ENCODE measurements at regions of chr22 and their contacts with region 1.

Region 1: DNA sequence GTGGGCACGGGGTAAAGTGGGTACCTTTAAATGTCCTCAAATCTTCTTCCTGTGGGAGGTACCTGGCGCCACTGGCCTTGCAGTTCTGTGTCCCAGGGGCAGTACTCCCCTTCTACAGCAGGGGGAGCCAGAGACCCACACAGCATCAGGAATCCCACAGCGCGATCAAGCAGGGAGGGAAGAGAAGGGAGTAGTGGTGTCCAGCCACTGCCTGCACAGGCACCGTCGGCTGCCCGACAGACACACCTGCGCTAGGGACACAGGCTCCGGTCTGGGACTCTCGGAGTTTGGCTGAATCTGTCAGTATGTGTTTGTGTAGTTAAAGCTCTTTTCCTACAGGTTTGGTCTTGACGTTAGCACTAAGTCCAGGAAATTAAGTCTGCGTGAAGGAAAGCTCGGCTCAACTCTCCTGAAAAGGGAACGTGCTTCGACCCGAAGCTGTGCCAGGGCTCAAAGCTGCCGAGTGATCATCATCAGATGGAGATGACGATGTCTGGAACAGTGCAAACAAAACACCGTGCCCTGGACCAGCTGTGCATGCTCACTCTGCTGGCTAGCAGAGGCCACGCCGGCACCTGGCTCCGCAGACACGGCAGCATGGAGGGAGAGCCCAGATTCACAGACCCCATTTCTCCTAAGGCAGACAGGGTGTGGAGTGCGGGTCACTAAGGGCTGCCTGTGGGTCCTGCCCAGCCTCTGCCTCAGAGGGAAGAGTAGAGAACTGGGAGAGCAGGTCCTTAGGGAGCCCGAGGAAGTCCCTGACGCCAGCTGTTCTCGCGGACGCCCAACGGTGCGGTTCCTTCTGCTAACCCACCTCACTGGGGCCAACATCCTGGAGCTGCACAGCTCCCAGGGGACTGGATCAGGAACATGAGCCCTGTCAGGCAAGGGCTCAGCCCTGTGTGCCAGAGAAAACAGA is 56.0 kb upstream of the BID start:
- DNase-seq: peak; percentile 75 to 82 (median 78)
- H3K4me3 ChIP-seq: no peak overlapping the region
- H3K4me3 Mint-ChIP-seq: no peak overlapping the region
- H3K27ac ChIP-seq: no peak overlapping the region
- H3K27ac Mint-ChIP-seq: peak overlapping the region in 3 of 7 donors; percentile 9 to 42 (median 35)
- H3K4me1 ChIP-seq: peaks cover 4% of the 10 kb centered on the region
- H3K4me1 Mint-ChIP-seq: peaks cover 5 to 10% (median 8%) of the 10 kb centered on the region in 4 donors
- H3K27me3 ChIP-seq: no peaks in the 10 kb centered on the region
- H3K27me3 Mint-ChIP-seq: no peaks in the 10 kb centered on the region

Region 2: GRCh38 chr22:18024276-18024947 is 194.1 kb after region 1 on chr22 and contains the start of gene MICAL3:
- CTCF ChIA-PET with region 1: interaction called, 54 read pairs
- POLR2A ChIA-PET with region 1: interaction called, 6 read pairs
- intact Hi-C with region 1: no loop called
- DNase-seq: peak; percentile 46 to 68 (median 64)
- H3K4me3 ChIP-seq: peak within 1 kb of the TSS; percentile 40 to 61
- H3K4me3 Mint-ChIP-seq: peak within 1 kb of the TSS; percentile 88 to 97 (median 94)
- H3K27ac ChIP-seq: no peak within 1 kb of the TSS
- H3K27ac Mint-ChIP-seq: peak within 1 kb of the TSS in 3 of 7 donors; percentile 45 to 86 (median 51)
- H3K4me1 ChIP-seq: peaks cover 15% of the 10 kb centered on the region
- H3K4me1 Mint-ChIP-seq: peaks cover 5 to 19% (median 10%) of the 10 kb centered on the region in 4 donors
- H3K27me3 ChIP-seq: peaks cover 17% of the 10 kb centered on the region
- H3K27me3 Mint-ChIP-seq: peaks cover 22 to 28% of the 10 kb centered on the region in 2 donors
- total RNA-seq, gene MICAL3: 25.9 to 28.9 TPM

Measured in CD4-positive, alpha-beta memory T cell (primary cell).